Activated T-helper 1 cell treated with anti-CD3 and anti-CD28 coated beads, Interleukin-12 subunit alpha, Interleukin-12 subunit beta, Interleukin-2, Interleukin-4 antibody, amounts not matched to agents 30 ng/mL and 10 ng/mL and 1 ng/mL, durations not matched to agents 14 hours and 24 hours and 36 hours (primary cell): ENCODE measurements at regions of chr5 and their contacts with region 1.

Region 1: DNA sequence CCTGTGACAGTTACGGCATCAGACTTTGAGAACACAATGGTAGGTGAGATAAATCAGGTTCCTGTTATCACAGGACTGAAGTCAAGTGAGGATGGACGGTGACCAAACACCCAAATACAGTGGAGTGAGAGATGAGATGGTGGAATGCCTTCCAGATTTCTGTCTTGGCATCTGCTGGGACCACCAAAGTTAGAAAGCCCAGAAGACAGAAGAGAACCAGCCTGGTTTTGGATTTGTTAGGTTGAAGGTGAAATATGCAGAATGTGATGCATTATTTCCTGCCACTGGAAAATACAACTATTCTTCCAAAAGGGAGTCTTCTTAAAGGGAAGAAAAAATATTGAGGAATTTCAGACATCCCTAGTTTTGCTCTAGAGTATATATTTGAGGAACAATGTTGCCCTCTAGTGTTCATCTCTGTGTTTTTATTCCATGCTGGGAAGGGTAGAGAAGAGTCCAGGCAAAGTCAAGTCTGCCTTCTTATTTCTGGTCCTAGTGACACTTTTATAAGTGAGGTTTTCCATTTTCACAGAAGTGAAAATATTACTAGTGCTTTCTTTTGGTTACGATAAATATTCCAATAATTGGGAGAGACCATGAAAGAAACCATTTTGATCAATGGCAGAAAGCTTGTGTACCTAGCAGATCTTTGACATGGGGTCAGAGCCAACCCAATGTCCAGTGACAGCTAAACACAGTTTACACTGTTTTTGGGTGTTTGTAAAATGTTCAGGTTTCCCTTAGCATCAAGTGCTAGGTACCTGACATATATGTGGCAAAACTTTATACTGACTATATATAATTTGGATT is 142.3 kb upstream of the ANKH start:
- DNase-seq: no peak
- H3K4me3 Mint-ChIP-seq: no peak overlapping the region
- H3K27ac Mint-ChIP-seq: no peak overlapping the region
- H3K4me1 Mint-ChIP-seq: no peaks in the 10 kb centered on the region
- H3K27me3 Mint-ChIP-seq: peaks cover 4% of the 10 kb centered on the region

Region 2: GRCh38 chr5:14685757-14686156 is 328.1 kb before region 1 on chr5:
- intact Hi-C with region 1: loop called (anchors 1 kb)
- DNase-seq: no peak
- H3K4me3 Mint-ChIP-seq: no peak overlapping the region
- H3K27ac Mint-ChIP-seq: peak overlapping the region; percentile 93
- H3K4me1 Mint-ChIP-seq: peaks cover 38% of the 10 kb centered on the region
- H3K27me3 Mint-ChIP-seq: no peaks in the 10 kb centered on the region